GM10248 (cell line): ENCODE measurements at regions of chr20 and their contacts with region 1.

Region 1: GRCh38 chr20:47379433-47380150 is 23.1 kb upstream of the ZMYND8 start:
- DNase-seq: no peak
- CTCF ChIP-seq: no peak

Region 2: GRCh38 chr20:46657618-46658017 is 722.0 kb before region 1 on chr20:
- CTCF ChIA-PET with region 1: no interaction called
- POLR2A ChIA-PET with region 1: no interaction called
- DNase-seq: no peak
- CTCF ChIP-seq: no peak

Region 3: GRCh38 chr20:46784436-46785127 is 595.0 kb before region 1 on chr20:
- CTCF ChIA-PET with region 1: no interaction called
- POLR2A ChIA-PET with region 1: no interaction called
- DNase-seq: no peak
- CTCF ChIP-seq: no peak

Region 4: DNA sequence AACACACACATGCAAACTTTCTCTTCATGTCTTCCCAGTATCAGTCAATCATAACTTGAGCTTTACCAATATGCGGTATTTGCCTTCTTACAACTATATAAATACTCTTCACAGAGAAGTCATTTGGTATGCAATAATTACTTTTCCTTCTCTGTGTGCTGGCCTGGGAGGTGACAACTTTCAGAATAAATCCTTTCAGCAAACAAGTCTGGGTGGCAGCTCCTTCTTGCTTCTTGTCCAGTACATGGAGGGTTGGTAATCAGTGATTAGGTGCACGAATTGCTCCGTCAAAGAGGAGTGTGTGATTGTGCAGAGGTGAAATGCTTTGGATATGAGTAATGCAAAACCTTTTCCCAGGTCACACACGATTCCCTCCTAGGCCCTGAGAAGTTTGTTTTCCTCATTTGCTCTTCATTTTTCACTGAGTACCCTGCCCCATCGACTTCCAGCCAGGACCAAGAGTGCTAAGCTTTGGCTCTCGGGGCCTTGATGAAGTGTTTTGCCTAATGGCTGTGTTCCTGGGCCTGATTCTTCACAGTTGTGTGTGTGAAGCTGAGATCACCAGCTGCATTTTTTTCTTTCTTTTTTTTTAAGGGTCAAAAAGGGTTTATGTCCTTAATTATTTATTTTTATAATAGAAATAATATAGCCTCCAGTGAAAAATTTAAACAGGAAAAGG is 239.6 kb before region 1 on chr20:
- CTCF ChIA-PET with region 1: no interaction called
- POLR2A ChIA-PET with region 1: no interaction called
- DNase-seq: no peak
- CTCF ChIP-seq: no peak

Region 5: GRCh38 chr20:47220161-47220582 is 159.4 kb before region 1 on chr20:
- CTCF ChIA-PET with region 1: interaction called, 35 read pairs
- POLR2A ChIA-PET with region 1: no interaction called
- DNase-seq: peak; percentile 54
- CTCF ChIP-seq: peak; percentile 29

Region 6: DNA sequence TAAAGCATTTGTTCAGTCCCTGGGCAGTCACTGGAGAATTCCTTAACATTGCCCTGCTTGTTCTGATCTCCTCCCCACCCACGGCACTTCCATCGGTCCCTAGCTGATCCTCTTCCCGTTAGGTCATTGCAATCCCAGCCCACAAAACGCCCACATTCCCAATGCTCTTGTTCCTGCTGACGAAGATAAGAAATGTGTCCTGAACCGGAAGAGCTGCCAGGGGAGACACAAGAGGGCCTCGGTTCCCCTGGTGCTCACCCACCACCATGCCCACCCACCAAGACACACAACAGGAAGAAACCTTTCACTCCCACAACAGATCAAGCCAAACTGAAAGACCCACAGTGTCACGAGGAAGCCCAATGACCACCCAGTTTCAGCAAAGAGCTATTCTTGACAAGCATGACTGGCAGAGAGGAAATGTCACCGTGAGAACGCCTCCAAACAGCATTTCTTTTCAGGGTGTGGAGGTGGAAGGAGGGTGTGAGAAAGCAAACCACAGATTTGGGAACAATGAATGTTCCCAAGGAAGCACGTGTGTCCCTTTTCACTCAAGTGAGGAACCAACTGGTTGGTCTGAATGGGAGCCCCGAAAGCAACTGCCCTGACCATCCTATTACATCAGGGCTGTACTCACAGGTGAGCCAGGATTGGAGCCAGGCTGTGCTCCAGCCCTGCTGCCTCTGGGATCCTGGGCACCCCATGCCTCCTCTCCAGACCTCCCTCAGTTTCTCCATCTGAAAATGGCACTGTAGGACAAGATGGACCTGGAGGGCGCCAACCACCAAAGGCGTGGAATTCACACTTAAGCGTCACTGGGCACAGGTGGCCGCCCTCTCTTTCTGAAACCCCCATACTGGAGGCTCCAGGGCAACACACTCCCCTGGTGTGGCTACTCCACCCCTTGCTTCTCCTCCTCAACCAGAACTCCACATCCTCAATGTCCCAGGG is 120.6 kb before region 1 on chr20:
- CTCF ChIA-PET with region 1: interaction called, 53 read pairs
- POLR2A ChIA-PET with region 1: interaction called, 5 read pairs
- DNase-seq: peak; percentile 73
- CTCF ChIP-seq: no peak

Region 7: DNA sequence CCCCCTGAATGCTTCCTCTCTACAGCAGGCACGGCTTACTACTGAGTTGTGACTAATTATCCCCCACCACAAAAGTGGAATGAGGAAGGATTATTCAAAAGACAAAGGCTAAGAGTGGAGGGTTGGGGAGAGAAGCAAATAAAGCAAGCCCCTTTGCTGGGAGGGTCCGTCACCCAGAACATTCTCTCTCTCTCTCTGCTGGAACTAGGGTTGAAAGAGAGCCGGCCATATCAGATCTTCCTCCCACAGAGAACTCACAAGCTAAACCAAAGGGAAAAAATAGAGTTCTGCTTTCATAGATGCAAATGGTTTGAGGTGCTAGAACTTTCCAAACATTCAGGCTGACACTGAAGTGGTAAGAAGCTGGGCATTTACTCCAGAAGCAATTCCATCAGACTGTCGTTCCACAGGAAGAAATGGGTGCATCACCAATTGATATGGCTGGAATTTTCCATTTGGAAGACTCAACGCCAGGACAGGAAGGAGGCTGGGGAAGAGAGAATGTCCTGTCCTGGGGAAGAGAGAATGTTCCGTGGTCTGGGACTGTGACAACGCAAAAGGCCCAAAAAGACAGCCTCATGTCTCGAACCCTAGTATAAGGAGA is 31.0 kb before region 1 on chr20:
- CTCF ChIA-PET with region 1: interaction called, 203 read pairs
- POLR2A ChIA-PET with region 1: interaction called, 3 read pairs
- DNase-seq: no peak
- CTCF ChIP-seq: no peak

Region 8: DNA sequence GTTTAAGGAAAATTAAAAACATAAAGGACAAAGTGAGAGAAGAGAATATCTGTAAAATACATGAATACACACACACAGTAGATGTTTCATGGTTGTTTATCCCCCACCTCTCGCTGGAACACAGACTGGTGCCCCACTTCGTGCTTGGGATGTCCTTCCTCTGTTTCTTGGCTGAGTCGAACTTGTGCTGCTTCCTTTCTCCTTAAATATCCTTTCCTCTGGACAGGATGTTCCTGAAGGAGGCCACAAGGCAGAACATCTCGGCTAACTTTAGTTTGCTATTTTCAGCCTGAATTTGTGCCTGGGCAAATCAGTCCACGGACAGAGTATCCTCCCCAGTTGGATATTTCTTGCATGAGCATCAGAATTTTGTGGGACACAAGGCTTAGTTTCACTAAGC is 31.6 kb after region 1 on chr20:
- CTCF ChIA-PET with region 1: interaction called, 31 read pairs
- POLR2A ChIA-PET with region 1: interaction called, 3 read pairs
- DNase-seq: no peak
- CTCF ChIP-seq: no peak